ENCODE measurements at regions of chr14 and their contacts with region 1.

Region 1: GRCh38 chr14:100988411-100988900 is 84.9 kb upstream of the RTL1 start:
- DNase-seq: peak; percentile 98
- H3K4me3 ChIP-seq: no peak overlapping the region
- H3K27ac ChIP-seq: peak overlapping the region; percentile 99
- H3K4me1 ChIP-seq: peaks cover 40% of the 10 kb centered on the region
- H3K27me3 ChIP-seq: no peaks in the 10 kb centered on the region
- CTCF ChIP-seq: no peak

Region 2: DNA sequence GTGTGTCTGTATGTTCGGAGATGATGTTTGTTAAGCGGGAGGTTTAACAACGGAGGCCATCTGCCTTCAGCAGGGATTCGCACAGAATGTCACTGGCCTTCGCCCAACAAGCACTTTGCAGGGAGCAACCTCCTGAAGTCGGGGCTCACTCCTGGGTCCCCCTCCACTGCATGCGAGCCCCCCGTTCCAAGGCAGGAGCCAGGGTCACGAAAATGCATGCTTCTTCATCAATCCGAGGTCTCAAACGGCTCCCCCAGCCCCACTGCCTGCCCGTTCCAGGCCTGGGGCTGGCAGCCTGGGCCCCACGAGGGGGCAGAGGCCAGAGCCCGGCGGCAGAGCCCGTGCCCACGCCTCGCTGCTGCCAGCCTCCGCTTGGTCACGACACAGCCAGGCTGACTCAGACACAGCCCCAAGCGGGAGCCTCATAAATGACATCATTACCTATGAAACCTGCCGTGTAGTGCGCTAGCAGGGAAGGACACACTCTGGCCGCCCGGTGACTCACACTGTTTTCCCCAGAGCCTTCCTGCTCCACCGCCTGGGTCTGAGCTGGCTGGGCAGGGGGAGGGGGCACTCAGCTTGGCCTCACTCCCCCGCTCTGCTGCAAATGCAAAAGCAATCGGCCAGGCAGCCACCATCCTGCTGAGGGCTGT is 84.6 kb after region 1 on chr14:
- CTCF ChIA-PET with region 1: no interaction called
- dilution Hi-C with region 1: no loop called
- in situ Hi-C with region 1: no loop called
- intact Hi-C with region 1: loop called (anchors 5 kb)
- DNase-seq: peak; percentile 95
- H3K4me3 ChIP-seq: no peak overlapping the region
- H3K27ac ChIP-seq: peak overlapping the region; percentile 34
- H3K4me1 ChIP-seq: peaks cover 12% of the 10 kb centered on the region
- H3K27me3 ChIP-seq: peaks cover 4% of the 10 kb centered on the region
- CTCF ChIP-seq: peak in 1 of 2 donors; percentile 33